ENCODE measurements at regions of chr19 and their contacts with region 1.

Region 1: DNA sequence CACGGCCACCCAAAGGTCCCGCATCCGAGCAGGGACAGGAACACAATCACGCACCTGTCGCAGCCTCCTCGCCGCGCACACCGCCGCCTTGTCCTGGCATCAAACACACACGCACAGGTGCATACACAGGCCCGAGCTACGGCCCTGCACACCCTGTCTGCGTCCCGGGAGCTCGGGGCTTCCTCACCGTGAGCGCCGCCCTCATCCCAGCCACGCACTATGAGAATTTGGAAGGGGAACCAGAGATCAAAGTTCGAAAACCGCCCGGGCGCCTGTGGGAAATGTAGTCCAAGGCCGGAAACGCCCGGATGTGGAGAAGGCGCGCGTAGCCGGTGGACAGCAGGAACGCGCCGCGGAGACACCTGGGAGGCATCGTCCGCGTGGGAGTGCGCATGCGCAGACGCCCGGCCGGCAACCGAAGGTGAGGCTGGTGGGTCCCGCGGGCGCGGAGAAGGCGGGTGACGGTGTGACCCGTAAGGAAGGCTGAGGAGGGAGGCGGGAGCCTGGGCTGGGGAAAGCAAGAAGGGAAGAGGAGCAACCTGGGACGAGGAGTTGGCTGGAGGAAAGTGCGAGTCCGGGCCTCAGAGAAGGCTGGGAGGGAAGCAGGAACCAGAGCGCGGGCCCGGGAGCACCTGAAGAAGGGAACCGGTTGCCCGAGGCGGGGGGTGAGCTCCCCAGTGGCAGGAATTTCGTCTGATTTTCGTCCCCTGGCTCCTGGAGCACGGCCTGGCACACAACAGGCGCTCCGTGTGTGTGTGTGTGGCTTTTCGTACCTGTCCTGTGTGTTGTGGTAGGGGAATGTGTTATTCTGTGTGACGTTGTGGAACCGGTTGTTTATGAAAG is at the start of gene ZNF567:
- DNase-seq: peak; percentile 98 to 99 (median 98)
- ATAC-seq: peak; percentile 99 to 100 (median 99)
- H3K4me3 ChIP-seq: peak within 1 kb of the TSS; percentile 59 to 91 (median 80)
- H3K27ac ChIP-seq: peak within 1 kb of the TSS in 11 of 12 donors; percentile 53 to 82 (median 73)
- H3K4me1 ChIP-seq: peaks cover 0 to 20% (median 14%) of the 10 kb centered on the region in 12 donors
- H3K27me3 ChIP-seq: no peaks in the 10 kb centered on the region
- CTCF ChIP-seq: no peak
- POLR2A ChIP-seq: peak in 1 of 2 donors; percentile 89
- total RNA-seq, gene ZNF567: 2.9 to 5.8 (median 3.9) TPM

Region 2: DNA sequence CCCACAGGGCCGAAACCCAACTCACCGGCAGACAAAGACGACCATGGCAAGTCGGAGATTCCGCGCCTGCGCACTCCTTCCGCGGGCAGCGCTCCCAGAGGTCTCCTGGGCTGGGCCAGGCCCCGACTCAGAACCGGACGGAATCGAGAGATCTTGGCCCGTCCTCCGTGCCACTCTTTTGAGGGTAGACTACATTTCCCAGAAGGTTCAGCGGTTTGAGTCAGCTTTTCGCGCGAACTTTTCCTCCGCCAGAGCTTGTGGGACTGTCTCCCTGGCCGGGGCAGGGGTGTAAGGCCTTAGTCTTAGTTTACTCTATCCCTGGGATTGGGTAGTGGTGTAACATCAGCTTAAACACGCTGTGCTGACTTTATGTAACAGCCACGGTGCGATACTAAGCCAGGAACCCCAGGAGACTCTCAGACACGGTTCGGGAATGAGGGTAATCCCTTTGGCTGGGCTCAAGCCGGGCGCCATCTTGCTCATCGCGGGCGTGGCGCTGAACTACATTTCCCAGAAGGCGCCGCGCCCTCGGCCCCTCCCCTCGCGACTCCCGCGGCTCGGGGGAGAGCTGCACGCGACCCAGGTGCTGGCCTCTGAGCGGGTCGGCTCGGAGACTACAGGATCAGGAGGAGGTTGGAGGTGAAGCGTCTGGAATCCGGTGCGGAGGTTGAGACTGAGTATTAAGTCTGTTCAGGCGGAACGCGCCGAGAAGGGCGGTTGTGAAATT is 159.1 kb before region 1 on chr19 and contains the start of gene ZNF260:
- intact Hi-C with region 1: loop called in 2 of 10 experiments (anchors 10 kb)
- DNase-seq: peak; percentile 97 to 99 (median 98)
- ATAC-seq: peak; percentile 99
- H3K4me3 ChIP-seq: peak within 1 kb of the TSS; percentile 40 to 89 (median 74)
- H3K27ac ChIP-seq: peak within 1 kb of the TSS; percentile 73 to 99 (median 94)
- H3K4me1 ChIP-seq: peaks cover 0 to 26% (median 15%) of the 10 kb centered on the region in 12 donors
- H3K27me3 ChIP-seq: no peaks in the 10 kb centered on the region
- CTCF ChIP-seq: peak in 3 of 12 donors; percentile 10 to 19 (median 16)
- POLR2A ChIP-seq: peak in 1 of 2 donors; percentile 48
- total RNA-seq, gene ZNF260: 5.2 to 13.7 (median 8.5) TPM

Region 3: DNA sequence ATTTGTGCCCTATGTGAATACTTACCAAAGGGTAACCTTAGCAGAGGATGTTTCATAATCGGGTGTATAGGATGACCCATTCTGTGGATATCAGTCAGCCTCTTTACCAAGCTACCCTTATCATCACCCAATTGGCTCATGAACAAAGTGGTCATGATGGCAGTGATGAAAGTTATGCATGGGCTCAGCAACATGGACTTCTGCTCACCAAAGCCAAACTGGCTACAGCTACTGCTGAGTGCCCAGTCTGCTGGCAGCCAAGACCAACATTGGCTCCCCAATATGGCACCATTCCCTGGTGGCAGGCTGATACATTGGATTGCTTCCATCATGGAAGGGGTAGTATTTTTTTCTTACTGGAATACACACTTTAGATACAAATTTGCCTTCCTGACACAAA is 15.1 kb before region 1 on chr19:
- intact Hi-C with region 1: loop called in 2 of 10 experiments (anchors 2 kb)
- DNase-seq: peak in 3 of 5 donors; percentile 27 to 38 (median 34)
- ATAC-seq: peak; percentile 43 to 54 (median 48)
- H3K4me3 ChIP-seq: no peak overlapping the region
- H3K27ac ChIP-seq: no peak overlapping the region
- H3K4me1 ChIP-seq: peaks cover 0 to 24% (median 11%) of the 10 kb centered on the region in 12 donors
- H3K27me3 ChIP-seq: no peaks in the 10 kb centered on the region
- CTCF ChIP-seq: no peak
- POLR2A ChIP-seq: no peak

Region 4: GRCh38 chr19:38033658-38034498 is 1346.4 kb after region 1 on chr19:
- intact Hi-C with region 1: no loop called
- DNase-seq: no peak
- ATAC-seq: peak in 1 of 4 donors; percentile 41
- H3K4me3 ChIP-seq: no peak overlapping the region
- H3K27ac ChIP-seq: peak overlapping the region in 1 of 12 donors; percentile 52
- H3K4me1 ChIP-seq: peaks cover 0 to 31% (median 14%) of the 10 kb centered on the region in 12 donors
- H3K27me3 ChIP-seq: no peaks in the 10 kb centered on the region
- CTCF ChIP-seq: no peak
- POLR2A ChIP-seq: no peak

Measured in heart left ventricle (tissue), 16 donors.